PC-3 (cell line): ENCODE measurements at regions of chr2 and their contacts with region 1.

Region 1: GRCh38 chr2:122960759-122961641 is 1064.1 kb upstream of the CNTNAP5 start:
- DNase-seq: peak; percentile 96
- ATAC-seq: peak; percentile 89
- H3K4me3 ChIP-seq: peak overlapping the region; percentile 54
- H3K27ac ChIP-seq: peak overlapping the region; percentile 85
- H3K4me1 ChIP-seq: peaks cover 27% of the 10 kb centered on the region
- H3K27me3 ChIP-seq: no peaks in the 10 kb centered on the region
- CTCF ChIP-seq: peak; percentile 42; the same call in 1 of the 2 replicates

Region 2: DNA sequence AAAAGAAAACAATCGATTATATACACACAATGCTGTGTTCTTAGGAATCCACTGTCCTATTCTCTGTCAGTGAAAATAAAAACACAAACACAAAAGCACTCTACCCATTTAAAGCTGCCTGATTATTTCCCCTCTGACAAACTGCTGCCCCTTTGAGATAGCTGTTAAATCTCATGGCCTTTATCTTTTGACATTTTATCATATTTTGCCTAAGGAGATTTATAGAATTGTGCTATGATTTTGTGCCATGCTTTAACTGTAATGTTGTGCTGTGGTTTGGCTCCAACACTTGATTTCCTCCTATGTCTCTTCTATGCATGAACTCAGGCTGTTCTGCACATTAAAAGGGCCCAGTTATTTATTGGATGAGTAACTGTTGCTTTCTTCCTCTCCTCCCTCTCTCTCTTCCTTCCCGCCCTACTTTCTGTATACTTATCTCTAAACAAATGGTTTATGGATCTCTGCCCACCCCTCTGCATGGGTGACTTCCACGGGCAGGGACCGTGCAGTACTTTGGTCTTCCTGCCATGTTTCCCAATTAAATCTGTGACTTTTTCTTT is 108.9 kb before region 1 on chr2:
- CTCF ChIA-PET with region 1: no interaction called
- POLR2A ChIA-PET with region 1: no interaction called
- intact Hi-C with region 1: loop called (anchors 1 kb)
- DNase-seq: peak; percentile 87
- ATAC-seq: peak; percentile 74
- H3K4me3 ChIP-seq: no peak overlapping the region
- H3K27ac ChIP-seq: peak overlapping the region; percentile 85
- H3K4me1 ChIP-seq: peaks cover 50% of the 10 kb centered on the region
- H3K27me3 ChIP-seq: no peaks in the 10 kb centered on the region
- CTCF ChIP-seq: no peak

Region 3: DNA sequence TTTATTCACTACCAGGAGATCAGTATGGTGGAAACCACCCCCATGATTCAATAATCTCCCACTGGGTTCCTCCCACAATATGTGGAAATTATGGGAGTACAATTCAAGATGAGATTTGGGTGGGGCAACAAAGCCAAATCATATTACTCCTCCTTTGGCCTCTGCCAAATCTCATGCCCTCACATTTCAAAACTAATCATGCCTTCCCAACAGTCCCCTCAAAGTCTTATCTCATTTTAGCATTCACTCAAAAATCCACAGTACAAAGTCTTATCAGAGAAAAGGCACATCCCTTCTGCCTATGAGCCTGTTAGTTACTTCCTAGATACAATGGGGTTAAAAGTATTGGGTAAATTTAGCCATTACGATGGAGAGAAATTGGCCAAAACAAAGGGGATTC is 74.5 kb after region 1 on chr2:
- CTCF ChIA-PET with region 1: no interaction called
- POLR2A ChIA-PET with region 1: no interaction called
- intact Hi-C with region 1: no loop called
- DNase-seq: no peak
- ATAC-seq: no peak
- H3K4me3 ChIP-seq: no peak overlapping the region
- H3K27ac ChIP-seq: no peak overlapping the region
- H3K4me1 ChIP-seq: no peaks in the 10 kb centered on the region
- H3K27me3 ChIP-seq: no peaks in the 10 kb centered on the region
- CTCF ChIP-seq: no peak

Region 4: DNA sequence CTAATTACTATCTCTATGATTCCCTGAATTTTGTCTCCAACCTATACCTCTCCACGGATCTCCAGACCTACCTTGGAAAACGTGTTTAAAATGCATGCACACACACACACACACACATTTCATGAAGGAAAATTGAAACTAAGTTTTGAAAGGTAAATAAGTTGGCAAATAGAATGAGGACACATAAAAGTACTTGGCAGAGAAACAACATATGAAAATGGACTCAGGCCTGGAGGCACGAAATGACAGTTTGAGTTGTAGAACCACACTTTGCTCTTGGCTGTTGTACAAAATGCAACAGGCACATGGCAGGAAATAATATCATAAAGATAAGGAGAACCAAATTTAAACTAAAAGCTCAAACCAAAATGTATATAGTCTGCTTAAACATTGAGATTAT is 196.0 kb after region 1 on chr2:
- CTCF ChIA-PET with region 1: no interaction called
- POLR2A ChIA-PET with region 1: no interaction called
- intact Hi-C with region 1: loop called (anchors 10 kb)
- DNase-seq: peak; percentile 6
- ATAC-seq: no peak
- H3K4me3 ChIP-seq: no peak overlapping the region
- H3K27ac ChIP-seq: no peak overlapping the region
- H3K4me1 ChIP-seq: no peaks in the 10 kb centered on the region
- H3K27me3 ChIP-seq: no peaks in the 10 kb centered on the region
- CTCF ChIP-seq: no peak

Region 5: GRCh38 chr2:123670286-123670685 is 709.3 kb after region 1 on chr2:
- CTCF ChIA-PET with region 1: no interaction called
- POLR2A ChIA-PET with region 1: no interaction called
- intact Hi-C with region 1: loop called (anchors 1 kb)
- DNase-seq: peak; percentile 91
- ATAC-seq: peak; percentile 98
- H3K4me3 ChIP-seq: no peak overlapping the region
- H3K27ac ChIP-seq: peak overlapping the region; percentile 50
- H3K4me1 ChIP-seq: peaks cover 19% of the 10 kb centered on the region
- H3K27me3 ChIP-seq: no peaks in the 10 kb centered on the region
- CTCF ChIP-seq: no peak

Region 6: DNA sequence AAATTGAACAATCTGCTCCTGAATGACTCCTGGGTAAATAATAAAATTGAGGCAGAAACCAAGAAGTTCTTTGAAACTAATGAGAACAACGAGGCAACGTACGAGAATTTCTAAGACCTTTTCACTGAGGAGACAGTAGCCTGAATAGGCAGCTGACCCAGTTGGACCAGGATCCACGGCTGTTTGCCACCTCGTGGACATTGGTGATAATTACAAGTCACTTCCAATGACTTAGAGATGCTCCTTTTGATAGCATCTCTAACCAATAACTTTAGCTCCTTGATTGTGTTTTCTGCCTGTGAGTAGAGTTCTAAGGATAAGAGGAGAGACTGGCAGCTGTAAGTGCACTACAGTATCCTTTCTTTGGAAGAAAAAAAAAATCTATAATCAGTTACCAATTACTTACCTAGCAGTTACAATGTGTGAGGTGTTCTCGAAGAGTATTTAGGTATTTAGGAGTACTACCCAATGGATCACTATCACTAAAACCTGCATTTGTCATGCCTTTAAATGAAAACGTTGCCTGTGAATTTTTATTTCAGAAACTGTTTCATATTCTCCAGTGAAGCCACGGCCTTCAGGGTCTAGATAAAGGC is 1032.8 kb after region 1 on chr2:
- CTCF ChIA-PET with region 1: no interaction called
- POLR2A ChIA-PET with region 1: no interaction called
- intact Hi-C with region 1: loop called (anchors 10 kb)
- DNase-seq: peak; percentile 70
- ATAC-seq: peak; percentile 84
- H3K4me3 ChIP-seq: no peak overlapping the region
- H3K27ac ChIP-seq: no peak overlapping the region
- H3K4me1 ChIP-seq: no peaks in the 10 kb centered on the region
- H3K27me3 ChIP-seq: no peaks in the 10 kb centered on the region
- CTCF ChIP-seq: peak; percentile 73